CD14-positive monocyte (primary cell): ENCODE measurements at regions of chr1 and their contacts with region 1.

Region 1: GRCh38 chr1:110846861-110847260 is 26.1 kb upstream of the CD53 start:
- DNase-seq: no peak
- H3K4me3 ChIP-seq: no peak overlapping the region
- H3K4me3 Mint-ChIP-seq: no peak overlapping the region
- H3K27ac ChIP-seq: no peak overlapping the region
- H3K27ac Mint-ChIP-seq: no peak overlapping the region
- H3K4me1 ChIP-seq: no peaks in the 10 kb centered on the region
- H3K4me1 Mint-ChIP-seq: no peaks in the 10 kb centered on the region
- H3K27me3 ChIP-seq: no peaks in the 10 kb centered on the region
- H3K27me3 Mint-ChIP-seq: peaks cover 0 to 1% (median 0%) of the 10 kb centered on the region in 3 donors
- CTCF ChIP-seq: no peak

Region 2: GRCh38 chr1:110746579-110747160 is 100.2 kb before region 1 on chr1:
- intact Hi-C with region 1: no loop called
- DNase-seq: peak; percentile 33 to 40 (median 36)
- H3K4me3 ChIP-seq: no peak overlapping the region
- H3K4me3 Mint-ChIP-seq: no peak overlapping the region
- H3K27ac ChIP-seq: no peak overlapping the region
- H3K27ac Mint-ChIP-seq: no peak overlapping the region
- H3K4me1 ChIP-seq: no peaks in the 10 kb centered on the region
- H3K4me1 Mint-ChIP-seq: no peaks in the 10 kb centered on the region
- H3K27me3 ChIP-seq: peaks cover 18 to 19% of the 10 kb centered on the region in 2 donors
- H3K27me3 Mint-ChIP-seq: peaks cover 24 to 41% (median 24%) of the 10 kb centered on the region in 3 donors
- CTCF ChIP-seq: no peak

Region 3: DNA sequence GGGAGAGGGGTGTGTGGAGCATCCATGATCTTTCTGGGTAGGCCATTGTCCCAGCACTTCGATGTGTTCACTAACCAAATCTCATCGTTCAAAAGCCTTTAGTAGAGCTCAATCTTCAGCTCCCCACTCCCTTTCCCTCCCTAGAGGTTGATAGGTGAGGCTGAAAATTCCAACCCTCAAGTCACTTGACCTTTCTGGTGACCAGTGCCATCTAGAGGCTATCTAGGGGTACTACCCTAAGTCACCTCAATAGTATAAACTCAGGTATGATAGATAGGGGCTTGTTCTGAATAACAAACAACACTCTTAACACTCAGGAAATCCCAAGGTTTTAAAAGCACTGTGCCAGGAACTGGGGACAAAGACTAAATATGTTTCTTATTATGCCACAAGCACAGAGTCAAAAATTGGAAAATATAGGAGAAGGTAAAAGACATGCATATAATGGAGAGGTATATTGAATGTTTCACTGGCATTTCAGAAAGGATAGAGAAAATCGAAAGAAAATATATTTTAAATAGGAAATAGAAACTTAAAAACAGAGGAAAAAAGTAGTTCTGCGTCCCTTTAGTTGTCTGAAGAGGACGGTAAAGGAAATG is 16.8 kb before region 1 on chr1:
- intact Hi-C with region 1: loop called in 1 of 2 experiments (anchors 2 kb)
- DNase-seq: peak; percentile 15 to 55 (median 50)
- H3K4me3 ChIP-seq: no peak overlapping the region
- H3K4me3 Mint-ChIP-seq: no peak overlapping the region
- H3K27ac ChIP-seq: no peak overlapping the region
- H3K27ac Mint-ChIP-seq: no peak overlapping the region
- H3K4me1 ChIP-seq: no peaks in the 10 kb centered on the region
- H3K4me1 Mint-ChIP-seq: no peaks in the 10 kb centered on the region
- H3K27me3 ChIP-seq: no peaks in the 10 kb centered on the region
- H3K27me3 Mint-ChIP-seq: peaks cover 0 to 3% (median 2%) of the 10 kb centered on the region in 3 donors
- CTCF ChIP-seq: peak; percentile 93